Sigmoid colon (tissue), 7 donors: ENCODE measurements at regions of chr3 and their contacts with region 1.

Region 1: GRCh38 chr3:126180477-126181397 is at the start of gene ALDH1L1:
- DNase-seq: peak; percentile 97
- H3K4me3 ChIP-seq: peak within 1 kb of the TSS; percentile 56 to 78 (median 62)
- H3K27ac ChIP-seq: peak within 1 kb of the TSS; percentile 86 to 95 (median 90)
- H3K4me1 ChIP-seq: peaks cover 0 to 36% (median 30%) of the 10 kb centered on the region in 4 donors
- H3K27me3 ChIP-seq: no peaks in the 10 kb centered on the region
- CTCF ChIP-seq: no peak
- EP300 ChIP-seq: peak; percentile 40 to 80 (median 75)
- POLR2A ChIP-seq: peak; percentile 47 to 65
- total RNA-seq, gene ALDH1L1: 15.0 to 32.5 (median 27.6) TPM

Region 2: GRCh38 chr3:126034481-126035361 is 146.0 kb before region 1 on chr3:
- intact Hi-C with region 1: no loop called
- DNase-seq: peak; percentile 32
- H3K4me3 ChIP-seq: no peak overlapping the region
- H3K27ac ChIP-seq: no peak overlapping the region
- H3K4me1 ChIP-seq: no peaks in the 10 kb centered on the region
- H3K27me3 ChIP-seq: no peaks in the 10 kb centered on the region
- CTCF ChIP-seq: no peak
- EP300 ChIP-seq: no peak
- POLR2A ChIP-seq: no peak

Region 3: GRCh38 chr3:126259411-126260391 is 79.0 kb after region 1 on chr3:
- intact Hi-C with region 1: loop called (anchors 5 kb)
- DNase-seq: peak; percentile 85
- H3K4me3 ChIP-seq: peak overlapping the region in 3 of 4 donors; percentile 14 to 38 (median 28)
- H3K27ac ChIP-seq: peak overlapping the region in 3 of 4 donors; percentile 16 to 42 (median 28)
- H3K4me1 ChIP-seq: peaks cover 0 to 7% (median 2%) of the 10 kb centered on the region in 4 donors
- H3K27me3 ChIP-seq: no peaks in the 10 kb centered on the region
- CTCF ChIP-seq: peak; percentile 74 to 86 (median 78)
- EP300 ChIP-seq: no peak
- POLR2A ChIP-seq: no peak

Region 4: DNA sequence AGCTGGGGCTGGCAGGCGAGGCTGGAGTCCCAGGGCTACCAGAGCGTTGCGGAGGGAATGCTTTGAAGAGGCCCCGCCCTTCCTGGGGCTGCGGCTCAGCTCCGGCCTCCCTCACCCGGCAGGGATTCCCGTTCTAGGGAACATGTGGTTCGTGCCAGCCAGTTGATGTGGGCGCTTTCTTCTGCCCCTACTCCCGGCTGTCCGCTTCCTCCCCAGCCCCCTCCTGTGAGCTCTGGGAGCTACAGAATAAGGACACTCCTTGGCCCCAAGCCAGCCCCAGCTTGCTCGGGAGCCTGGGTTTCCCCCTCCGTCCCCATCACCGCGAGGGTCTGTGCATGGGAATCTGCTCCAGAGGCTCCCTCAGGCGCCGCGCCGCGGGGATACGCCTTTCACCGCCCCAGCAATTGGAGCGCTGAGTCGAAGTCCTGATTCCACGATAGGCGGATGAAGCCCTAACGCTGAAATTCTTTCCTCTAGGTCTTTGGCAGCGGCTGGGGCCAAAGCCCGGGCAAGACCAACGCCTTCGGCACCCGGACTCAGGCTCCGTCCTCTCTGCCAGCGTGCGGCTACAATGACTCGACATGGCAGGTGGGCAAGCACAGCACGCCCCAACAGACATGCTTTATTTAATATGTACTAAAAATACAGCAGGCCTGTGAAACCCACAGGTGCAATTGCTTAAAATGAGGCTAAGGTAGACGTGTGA is 107.0 kb after region 1 on chr3:
- intact Hi-C with region 1: no loop called
- DNase-seq: peak; percentile 92
- H3K4me3 ChIP-seq: peak overlapping the region; percentile 32 to 54 (median 50)
- H3K27ac ChIP-seq: peak overlapping the region; percentile 87 to 88 (median 87)
- H3K4me1 ChIP-seq: peaks cover 0 to 23% (median 23%) of the 10 kb centered on the region in 4 donors
- H3K27me3 ChIP-seq: no peaks in the 10 kb centered on the region
- CTCF ChIP-seq: no peak
- EP300 ChIP-seq: peak in 1 of 4 donors; percentile 25
- POLR2A ChIP-seq: no peak